Dendritic cell treated with granulocyte-macrophage colony-stimulating factor and Interleukin-4, amounts not matched to agents 40 ng/mL and 50 ng/mL, for 4 days (primary cell): ENCODE measurements at regions of chr18 and their contacts with region 1.

Region 1: GRCh38 chr18:23828426-23828825 is 139.2 kb downstream of the LAMA3 start:
- H3K4me3 Mint-ChIP-seq: no peak overlapping the region
- H3K27ac Mint-ChIP-seq: no peak overlapping the region
- H3K4me1 Mint-ChIP-seq: no peaks in the 10 kb centered on the region
- H3K27me3 Mint-ChIP-seq: no peaks in the 10 kb centered on the region

Region 2: GRCh38 chr18:23283916-23284430 is 544.5 kb before region 1 on chr18:
- intact Hi-C with region 1: no loop called
- H3K4me3 Mint-ChIP-seq: no peak overlapping the region
- H3K27ac Mint-ChIP-seq: no peak overlapping the region
- H3K4me1 Mint-ChIP-seq: no peaks in the 10 kb centered on the region
- H3K27me3 Mint-ChIP-seq: no peaks in the 10 kb centered on the region

Region 3: DNA sequence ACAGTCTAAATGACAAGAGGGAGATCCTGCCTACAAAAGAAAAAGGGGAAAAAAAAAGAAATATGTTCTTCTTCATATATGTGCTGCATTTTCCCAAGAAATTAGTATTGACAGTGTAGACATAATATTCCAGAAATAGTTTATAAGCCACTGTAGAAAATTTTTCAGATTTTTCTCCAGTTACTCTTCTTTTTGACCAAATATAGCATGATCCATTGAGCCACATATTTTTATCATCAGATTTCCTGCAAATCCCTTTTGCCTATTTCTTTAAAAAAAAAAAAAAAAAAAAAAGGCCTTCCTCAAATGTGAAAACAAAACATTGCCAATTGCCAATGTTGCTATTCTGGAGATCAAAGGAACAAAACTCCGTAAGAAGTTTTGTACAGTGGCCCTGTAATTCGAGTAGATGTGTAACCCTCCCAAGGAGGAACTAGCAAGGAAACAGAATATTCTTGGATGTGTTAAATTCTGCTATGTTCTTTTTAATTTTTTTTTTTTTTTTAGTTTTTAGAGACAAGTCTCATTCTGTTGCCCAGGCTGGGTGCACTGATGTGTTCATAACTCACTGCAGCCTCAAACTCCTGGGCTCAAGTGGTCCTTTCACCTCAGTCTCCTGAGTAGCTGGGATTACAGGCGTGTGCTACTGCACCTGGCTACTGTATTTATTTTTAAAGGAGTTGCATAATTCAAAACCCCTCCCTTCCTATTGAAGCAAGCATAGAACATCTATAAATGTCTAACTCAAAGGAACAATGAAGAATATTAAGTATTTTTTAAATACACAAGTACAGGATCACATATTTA is 297.9 kb after region 1 on chr18:
- intact Hi-C with region 1: loop called (anchors 10 kb)
- H3K4me3 Mint-ChIP-seq: no peak overlapping the region
- H3K27ac Mint-ChIP-seq: no peak overlapping the region
- H3K4me1 Mint-ChIP-seq: no peaks in the 10 kb centered on the region
- H3K27me3 Mint-ChIP-seq: no peaks in the 10 kb centered on the region